CD4-positive, alpha-beta memory T cell (primary cell): ENCODE measurements at regions of chr3 and their contacts with region 1.

Region 1: GRCh38 chr3:131033480-131034080 is 6.9 kb downstream of the NEK11 start:
- DNase-seq: peak; percentile 51 to 65 (median 54)
- H3K4me3 ChIP-seq: no peak overlapping the region
- H3K4me3 Mint-ChIP-seq: no peak overlapping the region
- H3K27ac ChIP-seq: no peak overlapping the region
- H3K27ac Mint-ChIP-seq: peak overlapping the region in 1 of 7 donors; percentile 1
- H3K4me1 ChIP-seq: no peaks in the 10 kb centered on the region
- H3K4me1 Mint-ChIP-seq: peaks cover 0 to 1% (median 0%) of the 10 kb centered on the region in 4 donors
- H3K27me3 ChIP-seq: no peaks in the 10 kb centered on the region
- H3K27me3 Mint-ChIP-seq: no peaks in the 10 kb centered on the region

Region 2: DNA sequence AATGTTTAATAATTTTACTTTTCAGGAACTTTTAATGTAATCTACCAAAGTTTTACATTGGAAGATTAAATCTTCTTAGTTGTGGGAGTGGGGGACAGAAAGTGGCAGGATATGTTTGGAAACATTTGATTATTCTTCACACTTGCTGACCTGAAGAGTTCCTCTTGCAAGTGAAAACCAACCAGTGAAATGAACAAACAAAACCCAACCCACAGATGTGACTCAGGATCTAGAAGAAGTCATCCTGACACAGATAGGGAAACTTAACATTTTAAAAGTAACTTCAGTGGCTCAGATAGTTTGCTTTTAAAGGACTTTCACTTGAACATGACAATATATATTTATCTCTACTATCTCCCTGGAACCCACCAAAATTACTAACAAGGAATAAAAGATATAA is 62.4 kb before region 1 on chr3:
- CTCF ChIA-PET with region 1: no interaction called
- POLR2A ChIA-PET with region 1: no interaction called
- intact Hi-C with region 1: no loop called
- DNase-seq: no peak
- H3K4me3 ChIP-seq: no peak overlapping the region
- H3K4me3 Mint-ChIP-seq: no peak overlapping the region
- H3K27ac ChIP-seq: no peak overlapping the region
- H3K27ac Mint-ChIP-seq: no peak overlapping the region
- H3K4me1 ChIP-seq: no peaks in the 10 kb centered on the region
- H3K4me1 Mint-ChIP-seq: no peaks in the 10 kb centered on the region
- H3K27me3 ChIP-seq: no peaks in the 10 kb centered on the region
- H3K27me3 Mint-ChIP-seq: no peaks in the 10 kb centered on the region

Region 3: DNA sequence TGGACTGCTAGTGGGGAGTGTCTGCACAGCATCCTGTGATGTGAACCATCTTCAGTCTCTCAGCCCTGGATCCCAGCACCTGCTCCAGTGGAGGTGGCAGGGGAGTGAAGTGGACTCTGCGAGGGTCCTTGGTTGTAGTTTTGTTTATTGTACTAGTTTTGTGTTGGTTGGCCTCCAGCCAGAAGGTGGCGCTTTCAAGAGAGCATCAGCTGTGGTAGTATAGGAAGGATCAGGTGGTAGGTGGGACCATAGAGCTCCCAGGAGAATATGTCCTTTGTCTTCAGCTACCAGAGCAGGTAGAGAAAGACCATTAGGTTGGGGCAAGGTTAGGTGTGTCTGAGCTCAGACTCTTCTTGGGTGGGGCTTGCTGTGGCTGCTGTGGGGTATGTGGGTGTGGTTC is 14.0 kb after region 1 on chr3:
- CTCF ChIA-PET with region 1: interaction called, 25 read pairs
- POLR2A ChIA-PET with region 1: interaction called, 64 read pairs
- intact Hi-C with region 1: no loop called
- DNase-seq: no peak
- H3K4me3 ChIP-seq: no peak overlapping the region
- H3K4me3 Mint-ChIP-seq: no peak overlapping the region
- H3K27ac ChIP-seq: no peak overlapping the region
- H3K27ac Mint-ChIP-seq: peak overlapping the region in 1 of 7 donors; percentile 35
- H3K4me1 ChIP-seq: peaks cover 11% of the 10 kb centered on the region
- H3K4me1 Mint-ChIP-seq: peaks cover 9 to 28% (median 18%) of the 10 kb centered on the region in 4 donors
- H3K27me3 ChIP-seq: no peaks in the 10 kb centered on the region
- H3K27me3 Mint-ChIP-seq: no peaks in the 10 kb centered on the region

Region 4: GRCh38 chr3:131110087-131110486 is 76.5 kb after region 1 on chr3:
- CTCF ChIA-PET with region 1: no interaction called
- POLR2A ChIA-PET with region 1: no interaction called
- intact Hi-C with region 1: no loop called
- DNase-seq: no peak
- H3K4me3 ChIP-seq: no peak overlapping the region
- H3K4me3 Mint-ChIP-seq: no peak overlapping the region
- H3K27ac ChIP-seq: no peak overlapping the region
- H3K27ac Mint-ChIP-seq: no peak overlapping the region
- H3K4me1 ChIP-seq: no peaks in the 10 kb centered on the region
- H3K4me1 Mint-ChIP-seq: no peaks in the 10 kb centered on the region
- H3K27me3 ChIP-seq: no peaks in the 10 kb centered on the region
- H3K27me3 Mint-ChIP-seq: no peaks in the 10 kb centered on the region

Region 5: GRCh38 chr3:131142580-131142979 is 109.0 kb after region 1 on chr3:
- CTCF ChIA-PET with region 1: interaction called, 3 read pairs
- POLR2A ChIA-PET with region 1: no interaction called
- intact Hi-C with region 1: loop called (anchors 1 kb)
- DNase-seq: no peak
- H3K4me3 ChIP-seq: no peak overlapping the region
- H3K4me3 Mint-ChIP-seq: no peak overlapping the region
- H3K27ac ChIP-seq: no peak overlapping the region
- H3K27ac Mint-ChIP-seq: no peak overlapping the region
- H3K4me1 ChIP-seq: no peaks in the 10 kb centered on the region
- H3K4me1 Mint-ChIP-seq: no peaks in the 10 kb centered on the region
- H3K27me3 ChIP-seq: no peaks in the 10 kb centered on the region
- H3K27me3 Mint-ChIP-seq: no peaks in the 10 kb centered on the region

Region 6: GRCh38 chr3:131231710-131232389 is 198.3 kb after region 1 on chr3:
- CTCF ChIA-PET with region 1: no interaction called
- POLR2A ChIA-PET with region 1: no interaction called
- intact Hi-C with region 1: loop called (anchors 10 kb)
- DNase-seq: no peak
- H3K4me3 ChIP-seq: no peak overlapping the region
- H3K4me3 Mint-ChIP-seq: no peak overlapping the region
- H3K27ac ChIP-seq: no peak overlapping the region
- H3K27ac Mint-ChIP-seq: no peak overlapping the region
- H3K4me1 ChIP-seq: no peaks in the 10 kb centered on the region
- H3K4me1 Mint-ChIP-seq: no peaks in the 10 kb centered on the region
- H3K27me3 ChIP-seq: no peaks in the 10 kb centered on the region
- H3K27me3 Mint-ChIP-seq: no peaks in the 10 kb centered on the region

Region 7: GRCh38 chr3:131485119-131485518 is 451.5 kb after region 1 on chr3:
- CTCF ChIA-PET with region 1: no interaction called
- POLR2A ChIA-PET with region 1: no interaction called
- intact Hi-C with region 1: loop called (anchors 5 kb)
- DNase-seq: no peak
- H3K4me3 ChIP-seq: no peak overlapping the region
- H3K4me3 Mint-ChIP-seq: peak overlapping the region in 2 of 8 donors; percentile 20 to 24
- H3K27ac ChIP-seq: no peak overlapping the region
- H3K27ac Mint-ChIP-seq: peak overlapping the region in 1 of 7 donors; percentile 53
- H3K4me1 ChIP-seq: peaks cover 20% of the 10 kb centered on the region
- H3K4me1 Mint-ChIP-seq: peaks cover 13 to 30% (median 20%) of the 10 kb centered on the region in 4 donors
- H3K27me3 ChIP-seq: no peaks in the 10 kb centered on the region
- H3K27me3 Mint-ChIP-seq: no peaks in the 10 kb centered on the region

Region 8: GRCh38 chr3:132029182-132029902 is 995.8 kb after region 1 on chr3:
- CTCF ChIA-PET with region 1: interaction called, 10 read pairs
- POLR2A ChIA-PET with region 1: no interaction called
- intact Hi-C with region 1: no loop called
- DNase-seq: peak in 4 of 5 donors; percentile 27 to 31 (median 29)
- H3K4me3 ChIP-seq: no peak overlapping the region
- H3K4me3 Mint-ChIP-seq: no peak overlapping the region
- H3K27ac ChIP-seq: no peak overlapping the region
- H3K27ac Mint-ChIP-seq: no peak overlapping the region
- H3K4me1 ChIP-seq: peaks cover 3% of the 10 kb centered on the region
- H3K4me1 Mint-ChIP-seq: peaks cover 3 to 11% (median 5%) of the 10 kb centered on the region in 4 donors
- H3K27me3 ChIP-seq: peaks cover 16% of the 10 kb centered on the region
- H3K27me3 Mint-ChIP-seq: peaks cover 35 to 38% of the 10 kb centered on the region in 2 donors